Activated naive CD4-positive, alpha-beta T cell treated with anti-CD3 and anti-CD28 coated beads for 36 hours (primary cell): ENCODE measurements at regions of chr1 and their contacts with region 1.

Region 1: GRCh38 chr1:89719502-89720306 is 86.8 kb downstream of the LRRC8C start:
- DNase-seq: peak; percentile 28
- H3K4me3 Mint-ChIP-seq: peak overlapping the region; percentile 26
- H3K27ac Mint-ChIP-seq: peak overlapping the region; percentile 95
- H3K4me1 Mint-ChIP-seq: peaks cover 86% of the 10 kb centered on the region
- H3K27me3 Mint-ChIP-seq: no peaks in the 10 kb centered on the region

Region 2: GRCh38 chr1:89041119-89041641 is 678.5 kb before region 1 on chr1:
- CTCF ChIA-PET with region 1: no interaction called
- intact Hi-C with region 1: loop called (anchors 1 kb)
- DNase-seq: peak; percentile 63
- H3K4me3 Mint-ChIP-seq: peak overlapping the region; percentile 25
- H3K27ac Mint-ChIP-seq: peak overlapping the region; percentile 72
- H3K4me1 Mint-ChIP-seq: peaks cover 33% of the 10 kb centered on the region
- H3K27me3 Mint-ChIP-seq: peaks cover 11% of the 10 kb centered on the region

Region 3: GRCh38 chr1:89454845-89455521 is 264.7 kb before region 1 on chr1:
- CTCF ChIA-PET with region 1: no interaction called
- intact Hi-C with region 1: loop called (anchors 1 kb)
- DNase-seq: peak; percentile 85
- H3K4me3 Mint-ChIP-seq: no peak overlapping the region
- H3K27ac Mint-ChIP-seq: no peak overlapping the region
- H3K4me1 Mint-ChIP-seq: peaks cover 18% of the 10 kb centered on the region
- H3K27me3 Mint-ChIP-seq: peaks cover 4% of the 10 kb centered on the region

Region 4: GRCh38 chr1:89605692-89606091 is 114.0 kb before region 1 on chr1:
- CTCF ChIA-PET with region 1: interaction called, 13 read pairs
- intact Hi-C with region 1: loop called (anchors 1 kb)
- DNase-seq: no peak
- H3K4me3 Mint-ChIP-seq: no peak overlapping the region
- H3K27ac Mint-ChIP-seq: no peak overlapping the region
- H3K4me1 Mint-ChIP-seq: peaks cover 95% of the 10 kb centered on the region
- H3K27me3 Mint-ChIP-seq: no peaks in the 10 kb centered on the region

Region 5: GRCh38 chr1:89688607-89689006 is 31.1 kb before region 1 on chr1:
- CTCF ChIA-PET with region 1: interaction called, 4 read pairs
- intact Hi-C with region 1: loop called (anchors 1 kb)
- DNase-seq: no peak
- H3K4me3 Mint-ChIP-seq: no peak overlapping the region
- H3K27ac Mint-ChIP-seq: peak overlapping the region; percentile 54
- H3K4me1 Mint-ChIP-seq: peaks cover 78% of the 10 kb centered on the region
- H3K27me3 Mint-ChIP-seq: no peaks in the 10 kb centered on the region

Region 6: DNA sequence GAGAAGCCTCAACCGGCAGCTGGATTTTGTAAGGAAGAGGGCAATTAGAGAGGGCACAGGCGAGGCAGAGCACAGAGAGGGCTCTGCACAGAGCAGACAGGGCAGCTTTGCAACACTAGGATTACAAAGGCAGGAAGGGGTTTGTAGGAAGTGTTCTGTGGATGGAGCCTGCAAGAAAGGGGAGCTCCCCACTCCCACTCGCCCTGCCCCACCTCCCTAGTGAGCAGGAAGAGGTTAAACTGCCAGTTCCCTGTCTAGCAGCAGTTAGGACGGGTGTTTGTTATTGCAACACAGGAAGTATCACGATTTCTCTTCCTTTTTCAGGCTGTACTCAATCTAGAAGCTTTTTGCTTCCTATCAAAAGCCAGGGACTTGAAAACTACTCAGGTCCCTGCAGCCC is 37.8 kb after region 1 on chr1:
- CTCF ChIA-PET with region 1: interaction called, 33 read pairs
- intact Hi-C with region 1: loop called (anchors 1 kb)
- DNase-seq: peak; percentile 86
- H3K4me3 Mint-ChIP-seq: peak overlapping the region; percentile 67
- H3K27ac Mint-ChIP-seq: peak overlapping the region; percentile 70
- H3K4me1 Mint-ChIP-seq: peaks cover 72% of the 10 kb centered on the region
- H3K27me3 Mint-ChIP-seq: no peaks in the 10 kb centered on the region

Region 7: DNA sequence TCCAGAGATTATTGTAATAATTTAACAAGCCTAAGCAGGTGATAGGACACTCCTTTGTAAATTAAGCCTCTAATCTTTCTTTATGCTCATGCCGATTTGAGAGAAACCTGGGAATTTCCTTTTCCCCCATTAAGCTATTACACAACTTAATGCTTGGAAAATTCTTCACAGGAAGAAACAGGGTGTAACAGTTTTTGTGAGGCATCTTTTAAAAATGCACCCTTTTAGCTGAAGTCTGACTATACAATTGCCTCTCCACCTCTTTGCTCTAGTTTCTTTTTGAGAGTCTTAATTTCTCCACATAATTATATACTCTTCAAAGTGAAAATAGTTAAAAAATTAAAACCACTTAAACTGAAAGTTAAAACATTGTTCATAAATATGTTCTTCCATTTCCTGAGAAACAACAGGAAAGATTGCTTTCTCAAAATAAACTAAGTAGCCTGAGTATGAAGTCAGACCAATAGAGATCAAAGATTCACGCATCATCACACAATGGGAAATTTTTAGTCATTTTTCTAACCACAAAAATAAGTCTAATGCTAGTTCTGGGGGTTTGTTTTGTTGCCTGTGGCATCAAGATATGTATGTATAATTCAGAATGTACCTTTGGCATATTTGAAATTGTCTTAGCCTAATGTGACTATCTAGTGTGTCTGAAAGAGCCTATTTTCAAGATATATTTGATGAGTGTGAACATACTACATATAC is 135.9 kb after region 1 on chr1:
- CTCF ChIA-PET with region 1: no interaction called
- intact Hi-C with region 1: loop called (anchors 1 kb)
- DNase-seq: no peak
- H3K4me3 Mint-ChIP-seq: peak overlapping the region; percentile 44
- H3K27ac Mint-ChIP-seq: no peak overlapping the region
- H3K4me1 Mint-ChIP-seq: peaks cover 11% of the 10 kb centered on the region
- H3K27me3 Mint-ChIP-seq: no peaks in the 10 kb centered on the region

Region 8: DNA sequence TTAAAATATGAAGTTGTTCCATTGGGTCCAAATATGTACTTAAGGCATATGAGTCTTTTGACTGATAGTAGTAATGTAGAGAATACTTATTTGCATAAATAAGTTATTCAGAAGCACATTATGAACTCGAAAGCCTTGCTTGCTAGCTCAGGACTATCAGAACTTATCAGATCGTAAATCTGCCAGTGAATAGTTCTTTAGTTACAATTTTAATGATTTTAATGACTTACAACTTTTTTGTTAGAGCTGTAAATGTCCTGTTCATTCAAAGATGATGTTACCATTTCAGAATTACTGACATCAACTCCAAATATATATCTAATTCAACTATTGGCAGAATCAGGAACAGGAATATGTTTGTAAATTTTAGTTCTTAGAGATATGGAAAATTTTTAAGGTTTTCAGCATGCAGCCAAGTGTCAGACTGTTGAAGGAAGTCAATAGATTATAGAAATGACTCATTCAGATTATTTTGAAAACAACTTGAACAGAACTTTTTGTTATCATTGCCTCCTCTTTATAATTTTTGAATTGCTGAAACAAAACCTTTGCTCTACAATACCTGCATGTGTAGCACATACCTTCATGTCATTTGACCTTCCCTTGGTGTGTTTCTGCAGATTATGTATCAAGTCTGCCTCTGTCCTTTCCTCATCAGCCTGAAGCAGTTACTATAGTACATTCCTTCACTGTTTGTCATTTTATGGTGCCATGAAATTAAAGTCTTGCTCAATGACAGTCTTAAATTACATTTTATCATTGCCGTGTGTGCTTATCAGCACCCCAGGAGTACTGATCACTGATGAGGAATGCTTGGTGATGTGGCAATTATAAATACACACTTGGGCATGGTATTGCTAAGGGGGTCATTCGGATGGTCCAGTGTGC is 146.0 kb after region 1 on chr1:
- CTCF ChIA-PET with region 1: no interaction called
- intact Hi-C with region 1: no loop called
- DNase-seq: no peak
- H3K4me3 Mint-ChIP-seq: no peak overlapping the region
- H3K27ac Mint-ChIP-seq: no peak overlapping the region
- H3K4me1 Mint-ChIP-seq: peaks cover 68% of the 10 kb centered on the region
- H3K27me3 Mint-ChIP-seq: no peaks in the 10 kb centered on the region